WTC11 (cell line): ENCODE measurements at regions of chr19 and their contacts with region 1.

Region 1: GRCh38 chr19:19342756-19343322 is 22.2 kb downstream of the MAU2 start:
- DNase-seq: peak; percentile 78
- ATAC-seq: peak; percentile 80
- H3K4me3 Mint-ChIP-seq: no peak overlapping the region
- H3K27ac Mint-ChIP-seq: no peak overlapping the region
- H3K4me1 Mint-ChIP-seq: no peaks in the 10 kb centered on the region
- H3K27me3 Mint-ChIP-seq: no peaks in the 10 kb centered on the region
- CTCF ChIP-seq: peak; percentile 78

Region 2: GRCh38 chr19:19259741-19260140 is 83.1 kb before region 1 on chr19:
- CTCF ChIA-PET with region 1: interaction called, 10 read pairs
- POLR2A ChIA-PET with region 1: no interaction called
- DNase-seq: peak; percentile 53
- ATAC-seq: peak; percentile 77
- H3K4me3 Mint-ChIP-seq: peak overlapping the region; percentile 45; the same call in 1 of the 2 replicates
- H3K27ac Mint-ChIP-seq: no peak overlapping the region
- H3K4me1 Mint-ChIP-seq: peaks cover 22% of the 10 kb centered on the region
- H3K27me3 Mint-ChIP-seq: peaks cover 54% of the 10 kb centered on the region
- CTCF ChIP-seq: no peak